Heart left ventricle (tissue), 16 donors: ENCODE measurements at regions of chr14 and their contacts with region 1.

Region 1: GRCh38 chr14:28515571-28515970 is 251.0 kb upstream of the FOXG1 start:
- DNase-seq: no peak
- ATAC-seq: no peak
- H3K4me3 ChIP-seq: no peak overlapping the region
- H3K27ac ChIP-seq: no peak overlapping the region
- H3K4me1 ChIP-seq: no peaks in the 10 kb centered on the region
- H3K27me3 ChIP-seq: no peaks in the 10 kb centered on the region
- CTCF ChIP-seq: no peak
- POLR2A ChIP-seq: no peak

Region 2: DNA sequence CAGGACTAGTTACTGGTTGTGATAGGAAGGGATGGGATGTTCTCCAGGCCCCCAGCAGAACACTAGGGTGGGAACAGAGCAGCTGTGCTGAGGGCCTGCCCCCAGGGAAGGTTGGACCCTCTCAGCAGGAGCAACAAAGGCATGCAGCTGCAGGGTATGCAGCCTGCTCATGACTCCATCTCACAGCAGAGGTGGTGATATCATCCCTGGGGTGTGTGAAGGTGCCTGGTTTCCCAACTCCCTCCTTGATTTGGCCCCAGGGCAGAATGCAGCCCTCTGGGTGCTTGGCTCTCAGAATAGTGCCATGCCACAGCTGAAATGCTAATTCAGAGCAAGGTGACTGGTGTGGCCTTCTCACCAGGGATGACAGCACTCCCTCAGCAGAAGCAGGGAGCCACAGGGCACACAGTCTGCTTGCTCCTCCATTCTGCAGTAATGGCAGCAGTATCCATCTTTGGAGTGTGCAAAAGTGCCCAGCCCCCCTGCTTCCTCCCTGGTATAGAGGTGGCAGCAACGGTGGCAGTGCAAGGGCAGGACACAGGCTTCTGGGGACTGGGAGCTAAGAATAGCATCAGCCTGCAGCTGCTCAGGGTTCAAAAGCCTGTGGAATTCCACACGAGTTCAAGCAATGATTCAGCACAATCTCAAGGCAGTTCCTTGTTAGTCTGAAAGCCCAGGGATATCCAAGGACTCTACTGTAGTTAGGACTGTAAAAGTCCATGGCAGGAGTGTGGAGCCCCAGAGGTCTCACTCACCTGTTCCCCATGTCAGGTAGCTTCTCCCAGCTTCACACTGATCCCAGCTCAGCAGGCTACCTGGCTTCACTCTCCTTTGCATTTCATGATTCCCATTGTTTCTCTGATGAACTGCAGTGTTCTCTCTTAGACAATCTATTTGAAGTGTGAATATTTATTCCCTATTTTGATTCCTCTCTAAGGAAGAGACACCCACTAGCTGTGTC is 47.1 kb before region 1 on chr14:
- intact Hi-C with region 1: loop called in 1 of 10 experiments (anchors 5 kb)
- DNase-seq: no peak
- ATAC-seq: peak in 1 of 4 donors; percentile 20
- H3K4me3 ChIP-seq: no peak overlapping the region
- H3K27ac ChIP-seq: no peak overlapping the region
- H3K4me1 ChIP-seq: no peaks in the 10 kb centered on the region
- H3K27me3 ChIP-seq: no peaks in the 10 kb centered on the region
- CTCF ChIP-seq: no peak
- POLR2A ChIP-seq: no peak

Region 3: DNA sequence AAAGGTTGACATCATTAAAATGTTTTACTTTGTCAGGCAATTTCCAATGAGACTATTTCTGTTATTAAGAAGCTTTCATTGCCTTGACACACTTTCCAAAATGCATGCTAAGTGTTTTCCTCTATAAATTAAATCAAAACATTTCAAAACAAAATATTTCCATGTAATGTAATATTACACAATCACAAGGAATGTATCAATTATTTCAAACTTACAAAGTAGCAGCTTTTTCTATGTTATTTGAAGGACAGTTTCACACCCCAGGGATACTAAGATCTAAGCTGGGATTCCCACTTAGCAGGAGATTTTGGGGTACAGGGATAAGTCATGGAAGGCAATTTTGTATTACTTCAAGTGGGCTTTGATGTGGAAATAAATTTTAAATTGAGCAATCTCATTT is 395.9 kb after region 1 on chr14:
- intact Hi-C with region 1: no loop called
- DNase-seq: no peak
- ATAC-seq: no peak
- H3K4me3 ChIP-seq: no peak overlapping the region
- H3K27ac ChIP-seq: no peak overlapping the region
- H3K4me1 ChIP-seq: no peaks in the 10 kb centered on the region
- H3K27me3 ChIP-seq: no peaks in the 10 kb centered on the region
- CTCF ChIP-seq: no peak
- POLR2A ChIP-seq: no peak